ENCODE measurements at regions of chr6 and their contacts with region 1.

Region 1: GRCh38 chr6:26216356-26216885 is 129.2 kb downstream of the HFE start:
- DNase-seq: peak; percentile 83 to 98 (median 90)
- ATAC-seq: peak; percentile 69
- H3K4me3 ChIP-seq: peak overlapping the region; percentile 61
- H3K27ac ChIP-seq: peak overlapping the region; percentile 91
- H3K4me1 ChIP-seq: peaks cover 15 to 23% of the 10 kb centered on the region in 2 experiments
- H3K27me3 ChIP-seq: no peaks in the 10 kb centered on the region
- CTCF ChIP-seq: no peak; a peak in 1 of 6 replicates
- EP300 ChIP-seq: no peak
- POLR2A ChIP-seq: peak; percentile 100
- RAD21 ChIP-seq: no peak; a peak in 1 of 4 replicates

Region 2: DNA sequence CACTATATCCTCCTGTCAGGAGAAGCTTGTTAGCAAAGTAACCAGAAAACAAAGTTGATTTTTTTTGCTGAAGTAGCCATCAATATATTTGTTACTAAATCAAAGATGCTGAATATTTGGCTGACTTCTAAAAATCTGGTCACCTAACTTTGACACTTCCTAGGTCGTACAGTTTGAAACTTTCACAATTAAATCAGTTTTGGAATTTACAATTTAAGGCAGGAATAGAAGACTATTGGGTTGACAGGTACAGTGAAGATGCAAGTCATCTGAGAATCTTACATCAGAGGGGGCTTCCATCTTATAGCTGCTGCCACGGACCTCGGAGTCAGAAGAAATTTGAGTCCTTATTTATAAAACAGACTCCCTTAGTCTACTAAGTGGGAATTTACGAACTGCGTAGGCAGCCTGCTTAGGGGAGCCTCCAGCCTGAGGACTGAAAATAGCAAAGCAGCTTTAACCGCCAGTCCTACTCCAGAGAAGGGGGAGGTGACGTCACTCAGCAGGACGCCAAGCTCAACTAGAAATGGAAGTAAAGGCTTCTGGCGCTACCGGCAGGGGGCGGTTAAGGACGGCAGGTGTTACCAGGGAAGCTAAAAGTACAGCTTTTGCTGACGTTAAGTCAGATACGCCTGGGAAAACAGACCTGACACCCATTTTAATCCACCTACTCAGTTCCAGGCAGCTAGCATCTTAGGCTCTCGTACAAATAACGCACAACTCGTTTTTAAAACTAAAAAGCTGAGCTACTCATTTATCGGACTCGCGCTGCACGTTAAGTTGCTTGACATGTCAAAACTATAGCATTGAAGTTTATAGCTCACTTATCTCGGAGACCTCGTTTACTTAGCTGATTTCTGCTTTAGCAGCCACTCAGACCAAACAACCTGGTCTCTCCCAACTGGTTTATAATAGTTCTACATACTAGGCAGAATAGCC is 190.3 kb before region 1 on chr6:
- CTCF ChIA-PET with region 1: no interaction called
- POLR2A ChIA-PET with region 1: interaction called, 158 read pairs
- in situ Hi-C with region 1: no loop called
- intact Hi-C with region 1: no loop called
- DNase-seq: peak; percentile 72 to 98 (median 76)
- ATAC-seq: peak; percentile 43
- H3K4me3 ChIP-seq: peak overlapping the region; percentile 46
- H3K27ac ChIP-seq: peak overlapping the region; percentile 99
- H3K4me1 ChIP-seq: peaks cover 13 to 40% of the 10 kb centered on the region in 2 experiments
- H3K27me3 ChIP-seq: no peaks in the 10 kb centered on the region
- CTCF ChIP-seq: peak; percentile 81 to 98 (median 97)
- EP300 ChIP-seq: peak; percentile 75
- POLR2A ChIP-seq: no peak
- RAD21 ChIP-seq: peak; percentile 48 to 77

Region 3: GRCh38 chr6:26163427-26164119 is 52.8 kb before region 1 on chr6:
- CTCF ChIA-PET with region 1: no interaction called
- POLR2A ChIA-PET with region 1: interaction called, 175 read pairs
- in situ Hi-C with region 1: no loop called
- intact Hi-C with region 1: loop called (anchors 1 kb)
- DNase-seq: no peak
- ATAC-seq: no peak
- H3K4me3 ChIP-seq: no peak overlapping the region
- H3K27ac ChIP-seq: no peak overlapping the region
- H3K4me1 ChIP-seq: peaks cover 0 to 24% of the 10 kb centered on the region in 2 experiments; a peak in 3 of 5 replicates
- H3K27me3 ChIP-seq: no peaks in the 10 kb centered on the region
- CTCF ChIP-seq: no peak
- EP300 ChIP-seq: no peak
- POLR2A ChIP-seq: no peak
- RAD21 ChIP-seq: no peak

Region 4: DNA sequence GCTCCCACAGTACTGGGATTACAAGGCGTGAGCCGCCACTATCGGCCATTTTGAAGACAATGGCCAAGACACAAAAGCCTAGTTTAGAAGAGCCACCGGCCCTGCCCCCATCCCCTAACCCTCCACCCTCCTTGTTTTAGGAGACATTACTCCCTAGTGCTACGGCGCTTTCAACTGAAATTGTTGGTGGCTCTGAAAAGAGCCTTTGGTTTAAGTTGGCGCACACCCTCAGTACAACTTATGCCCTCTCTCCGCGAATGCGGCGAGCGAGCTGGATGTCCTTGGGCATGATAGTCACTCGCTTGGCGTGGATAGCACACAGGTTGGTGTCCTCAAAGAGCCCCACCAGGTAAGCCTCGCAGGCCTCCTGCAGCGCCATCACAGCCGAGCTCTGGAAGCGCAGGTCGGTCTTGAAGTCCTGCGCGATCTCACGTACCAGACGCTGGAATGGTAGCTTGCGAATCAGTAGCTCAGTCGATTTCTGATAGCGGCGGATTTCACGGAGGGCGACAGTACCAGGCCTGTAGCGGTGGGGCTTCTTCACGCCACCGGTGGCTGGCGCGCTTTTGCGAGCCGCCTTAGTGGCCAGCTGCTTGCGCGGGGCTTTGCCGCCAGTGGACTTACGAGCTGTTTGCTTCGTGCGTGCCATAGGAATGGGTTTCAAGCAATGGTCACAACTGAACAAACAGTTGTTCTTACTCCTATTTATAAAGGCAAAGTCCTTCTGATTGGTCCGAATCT is 33.7 kb after region 1 on chr6:
- CTCF ChIA-PET with region 1: no interaction called
- POLR2A ChIA-PET with region 1: interaction called, 94 read pairs
- in situ Hi-C with region 1: no loop called
- intact Hi-C with region 1: loop called (anchors 2 kb)
- DNase-seq: peak; percentile 39 to 86 (median 51)
- ATAC-seq: peak; percentile 73
- H3K4me3 ChIP-seq: peak overlapping the region; percentile 43
- H3K27ac ChIP-seq: peak overlapping the region; percentile 91
- H3K4me1 ChIP-seq: peaks cover 5 to 12% of the 10 kb centered on the region in 2 experiments; a peak in 3 of 5 replicates
- H3K27me3 ChIP-seq: no peaks in the 10 kb centered on the region
- CTCF ChIP-seq: peak; percentile 27 to 63 (median 42); a peak in 5 of 6 replicates
- EP300 ChIP-seq: 0 out of 2 replicates have a peak, but pooled peaks have one; percentile 28
- POLR2A ChIP-seq: peak; percentile 95
- RAD21 ChIP-seq: no peak; a peak in 2 of 4 replicates

Region 5: GRCh38 chr6:26304797-26305640 is 88.6 kb after region 1 on chr6:
- CTCF ChIA-PET with region 1: no interaction called
- POLR2A ChIA-PET with region 1: interaction called, 130 read pairs
- in situ Hi-C with region 1: loop called (anchors 5 kb)
- intact Hi-C with region 1: no loop called
- DNase-seq: peak; percentile 75 to 95 (median 81)
- ATAC-seq: peak; percentile 80
- H3K4me3 ChIP-seq: peak overlapping the region; percentile 41
- H3K27ac ChIP-seq: peak overlapping the region; percentile 87
- H3K4me1 ChIP-seq: peaks cover 8 to 54% of the 10 kb centered on the region in 2 experiments
- H3K27me3 ChIP-seq: no peaks in the 10 kb centered on the region
- CTCF ChIP-seq: no peak
- EP300 ChIP-seq: peak; percentile 79
- POLR2A ChIP-seq: no peak
- RAD21 ChIP-seq: peak in 1 of 2 experiments; percentile 14; a peak in 2 of 4 replicates

Region 6: GRCh38 chr6:26568601-26569432 is 352.4 kb after region 1 on chr6:
- CTCF ChIA-PET with region 1: no interaction called
- POLR2A ChIA-PET with region 1: interaction called, 27 read pairs
- in situ Hi-C with region 1: no loop called
- intact Hi-C with region 1: no loop called
- DNase-seq: peak; percentile 82 to 96 (median 84)
- ATAC-seq: peak; percentile 75
- H3K4me3 ChIP-seq: peak overlapping the region; percentile 75
- H3K27ac ChIP-seq: peak overlapping the region; percentile 92
- H3K4me1 ChIP-seq: peaks cover 3 to 8% of the 10 kb centered on the region in 2 experiments; a peak in 2 of 5 replicates
- H3K27me3 ChIP-seq: no peaks in the 10 kb centered on the region
- CTCF ChIP-seq: peak; percentile 80 to 83 (median 81)
- EP300 ChIP-seq: peak; percentile 76
- POLR2A ChIP-seq: peak; percentile 24; the same call in 1 of the 2 replicates
- RAD21 ChIP-seq: peak; percentile 88 to 90